ENCODE measurements at regions of chr11 and their contacts with region 1.

Region 1: GRCh38 chr11:78045851-78046485 is 17.7 kb upstream of the THRSP start:
- DNase-seq: peak; percentile 66 to 82 (median 76)
- H3K4me3 ChIP-seq: no peak overlapping the region
- H3K4me3 Mint-ChIP-seq: peak overlapping the region; percentile 47 to 82 (median 64)
- H3K27ac ChIP-seq: no peak overlapping the region
- H3K27ac Mint-ChIP-seq: peak overlapping the region in 3 of 7 donors; percentile 42 to 80 (median 51)
- H3K4me1 ChIP-seq: peaks cover 5% of the 10 kb centered on the region
- H3K4me1 Mint-ChIP-seq: peaks cover 6 to 13% (median 9%) of the 10 kb centered on the region in 4 donors
- H3K27me3 ChIP-seq: no peaks in the 10 kb centered on the region
- H3K27me3 Mint-ChIP-seq: no peaks in the 10 kb centered on the region

Region 2: GRCh38 chr11:77776455-77776854 is 269.5 kb before region 1 on chr11:
- CTCF ChIA-PET with region 1: interaction called, 10 read pairs
- POLR2A ChIA-PET with region 1: no interaction called
- intact Hi-C with region 1: loop called (anchors 1 kb)
- DNase-seq: peak in 4 of 5 donors; percentile 18 to 32 (median 26)
- H3K4me3 ChIP-seq: no peak overlapping the region
- H3K4me3 Mint-ChIP-seq: no peak overlapping the region
- H3K27ac ChIP-seq: no peak overlapping the region
- H3K27ac Mint-ChIP-seq: no peak overlapping the region
- H3K4me1 ChIP-seq: peaks cover 23% of the 10 kb centered on the region
- H3K4me1 Mint-ChIP-seq: peaks cover 40 to 70% (median 50%) of the 10 kb centered on the region in 4 donors
- H3K27me3 ChIP-seq: no peaks in the 10 kb centered on the region
- H3K27me3 Mint-ChIP-seq: no peaks in the 10 kb centered on the region

Region 3: GRCh38 chr11:78061088-78061921 is 15.3 kb after region 1 on chr11:
- CTCF ChIA-PET with region 1: interaction called, 16 read pairs
- POLR2A ChIA-PET with region 1: no interaction called
- intact Hi-C with region 1: no loop called
- DNase-seq: no peak
- H3K4me3 ChIP-seq: no peak overlapping the region
- H3K4me3 Mint-ChIP-seq: no peak overlapping the region
- H3K27ac ChIP-seq: no peak overlapping the region
- H3K27ac Mint-ChIP-seq: no peak overlapping the region
- H3K4me1 ChIP-seq: no peaks in the 10 kb centered on the region
- H3K4me1 Mint-ChIP-seq: peaks cover 0 to 1% (median 0%) of the 10 kb centered on the region in 4 donors
- H3K27me3 ChIP-seq: no peaks in the 10 kb centered on the region
- H3K27me3 Mint-ChIP-seq: no peaks in the 10 kb centered on the region

Region 4: DNA sequence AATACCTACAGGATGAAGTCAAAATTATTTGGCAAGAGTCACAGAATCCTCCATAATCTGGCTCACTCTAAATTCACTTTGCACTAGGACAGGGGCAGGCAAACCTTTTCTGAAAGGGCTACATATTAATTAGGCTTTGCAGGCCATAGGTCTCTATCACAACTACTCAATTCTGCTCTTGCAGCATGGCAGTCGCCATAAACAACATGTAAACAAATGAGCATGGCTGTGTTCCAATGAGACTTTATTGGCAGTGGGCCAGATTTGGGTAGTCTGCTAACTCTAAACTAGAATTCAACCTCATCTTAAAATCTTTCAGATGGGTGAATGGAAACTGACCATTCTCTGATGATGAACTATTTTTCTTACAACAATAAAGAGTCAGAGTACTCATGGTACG is 23.5 kb after region 1 on chr11:
- CTCF ChIA-PET with region 1: interaction called, 11 read pairs
- POLR2A ChIA-PET with region 1: no interaction called
- intact Hi-C with region 1: no loop called
- DNase-seq: no peak
- H3K4me3 ChIP-seq: no peak overlapping the region
- H3K4me3 Mint-ChIP-seq: no peak overlapping the region
- H3K27ac ChIP-seq: no peak overlapping the region
- H3K27ac Mint-ChIP-seq: no peak overlapping the region
- H3K4me1 ChIP-seq: no peaks in the 10 kb centered on the region
- H3K4me1 Mint-ChIP-seq: peaks cover 0 to 14% (median 6%) of the 10 kb centered on the region in 4 donors
- H3K27me3 ChIP-seq: no peaks in the 10 kb centered on the region
- H3K27me3 Mint-ChIP-seq: no peaks in the 10 kb centered on the region

Measured in CD4-positive, alpha-beta memory T cell (primary cell).